ENCODE measurements at regions of chr20 and their contacts with region 1.

Region 1: DNA sequence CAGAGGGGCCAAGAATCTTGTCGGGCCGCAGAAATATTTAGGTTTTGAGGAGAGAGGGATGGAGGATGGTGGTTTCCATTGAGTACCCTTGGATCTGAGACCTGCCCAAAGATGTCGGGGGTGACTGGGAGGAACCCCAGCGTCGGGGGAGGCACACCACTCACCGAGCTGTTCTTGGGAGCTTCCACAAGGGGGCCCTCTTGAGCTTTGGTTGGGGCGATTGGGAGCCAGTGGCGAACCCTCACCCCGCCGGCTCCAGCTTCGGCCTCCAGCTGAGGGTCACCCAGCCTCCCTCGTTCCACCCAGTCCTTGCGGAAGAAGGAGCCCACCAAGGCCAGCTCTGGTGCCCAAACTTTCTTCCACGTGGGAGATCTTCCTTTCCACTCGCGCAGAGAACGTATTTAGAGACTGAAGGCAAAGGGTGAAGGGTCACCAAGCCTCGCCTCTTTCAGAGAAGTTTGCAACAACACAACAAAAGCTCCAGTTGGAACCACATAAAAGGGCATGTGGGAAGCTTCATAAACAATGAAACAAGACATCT is 33.6 kb downstream of the APCDD1L start:
- DNase-seq: no peak
- H3K4me3 ChIP-seq: no peak overlapping the region
- CTCF ChIP-seq: peak; percentile 62

Region 2: DNA sequence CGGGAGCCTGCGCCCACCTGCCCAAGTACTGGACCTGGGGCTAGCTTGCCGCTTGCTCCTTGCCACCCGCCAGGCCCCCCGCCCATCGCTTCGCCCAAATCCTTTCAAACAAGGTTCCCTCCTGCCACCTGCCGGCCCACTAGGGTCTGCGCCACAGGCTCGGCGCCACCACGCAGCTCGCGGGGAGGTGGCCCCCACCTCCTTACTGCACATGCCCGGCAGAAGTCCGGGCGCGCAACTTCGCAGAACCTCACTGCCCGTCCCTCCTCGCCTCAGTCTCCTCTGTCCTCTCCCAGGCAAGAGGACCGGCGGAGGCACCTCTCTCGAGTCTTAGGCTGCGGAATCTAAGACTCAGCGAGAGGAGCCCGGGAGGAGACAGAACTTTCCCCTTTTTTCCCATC is 357.9 kb after region 1 on chr20:
- CTCF ChIA-PET with region 1: interaction called, 18 read pairs
- POLR2A ChIA-PET with region 1: no interaction called
- DNase-seq: no peak
- H3K4me3 ChIP-seq: peak overlapping the region; percentile 36
- CTCF ChIP-seq: peak; percentile 61

Region 3: GRCh38 chr20:58850693-58851174 is 369.2 kb after region 1 on chr20 and contains the start of gene GNAS-AS1:
- CTCF ChIA-PET with region 1: interaction called, 14 read pairs
- POLR2A ChIA-PET with region 1: no interaction called
- DNase-seq: peak; percentile 61
- H3K4me3 ChIP-seq: peak within 1 kb of the TSS; percentile 73
- CTCF ChIP-seq: no peak